Naive thymus-derived CD4-positive, alpha-beta T cell (primary cell): ENCODE measurements at regions of chr2 and their contacts with region 1.

Region 1: GRCh38 chr2:216034065-216034464 is 20.7 kb upstream of the MREG start:
- DNase-seq: peak; percentile 50 to 83 (median 69)
- ATAC-seq: peak; percentile 89
- H3K4me3 ChIP-seq: no peak overlapping the region
- H3K4me3 Mint-ChIP-seq: no peak overlapping the region
- H3K27ac ChIP-seq: no peak overlapping the region
- H3K27ac Mint-ChIP-seq: peak overlapping the region in 1 of 9 donors; percentile 13
- H3K4me1 ChIP-seq: peaks cover 0 to 10% of the 10 kb centered on the region in 2 donors
- H3K4me1 Mint-ChIP-seq: peaks cover 15 to 31% (median 25%) of the 10 kb centered on the region in 7 donors
- H3K27me3 ChIP-seq: no peaks in the 10 kb centered on the region
- H3K27me3 Mint-ChIP-seq: no peaks in the 10 kb centered on the region

Region 2: DNA sequence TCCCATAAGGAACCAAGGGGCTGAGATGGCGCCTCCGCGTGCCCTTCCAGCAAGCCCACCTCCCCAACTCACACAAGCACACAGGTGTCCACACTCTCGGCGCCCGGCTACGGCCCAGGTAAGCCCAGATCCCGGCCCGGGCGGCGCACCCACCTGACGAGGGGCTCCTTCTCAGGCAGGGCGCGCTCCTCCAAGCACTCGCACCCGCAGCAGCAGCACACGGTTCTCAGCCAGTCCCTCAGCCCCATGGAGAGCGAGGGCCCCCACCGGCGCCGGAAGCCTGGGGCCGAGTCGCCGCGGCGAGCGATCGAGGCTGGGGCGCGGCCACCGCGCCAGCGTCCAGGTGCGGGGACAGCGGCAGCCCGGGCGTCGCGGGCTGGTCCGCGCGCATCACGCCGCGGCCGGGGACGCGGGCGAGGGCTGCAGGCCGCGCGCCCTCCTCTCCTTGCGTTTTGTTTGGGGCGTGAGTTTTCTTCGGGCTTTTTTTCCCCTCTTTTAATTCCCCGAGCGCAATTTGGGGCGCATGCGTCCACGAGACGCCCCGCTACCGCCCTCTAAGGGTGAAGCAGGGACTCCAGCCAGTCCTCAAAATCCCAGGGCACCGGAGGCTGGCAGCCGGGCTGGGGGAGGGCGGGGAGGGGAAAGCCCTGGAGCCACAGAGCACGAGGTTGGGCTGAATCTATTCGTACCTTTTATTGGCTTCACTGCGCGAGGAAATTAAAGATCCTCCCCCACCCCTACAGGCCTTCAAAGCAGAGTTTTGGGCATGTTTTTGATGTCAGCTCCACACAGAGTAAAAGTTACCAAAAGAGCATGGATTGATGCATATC is 20.8 kb before region 1 on chr2 and contains the start of gene MREG:
- CTCF ChIA-PET with region 1: interaction called, 8 read pairs
- POLR2A ChIA-PET with region 1: interaction called, 3 read pairs
- intact Hi-C with region 1: loop called (anchors 1 to 2 kb)
- DNase-seq: peak; percentile 67 to 84 (median 80)
- ATAC-seq: peak; percentile 90
- H3K4me3 ChIP-seq: peak within 1 kb of the TSS; percentile 65
- H3K4me3 Mint-ChIP-seq: peak within 1 kb of the TSS; percentile 82 to 93 (median 89)
- H3K27ac ChIP-seq: peak within 1 kb of the TSS; percentile 59
- H3K27ac Mint-ChIP-seq: peak within 1 kb of the TSS; percentile 33 to 91 (median 74)
- H3K4me1 ChIP-seq: peaks cover 30 to 31% of the 10 kb centered on the region in 2 donors
- H3K4me1 Mint-ChIP-seq: peaks cover 27 to 70% (median 53%) of the 10 kb centered on the region in 7 donors
- H3K27me3 ChIP-seq: no peaks in the 10 kb centered on the region
- H3K27me3 Mint-ChIP-seq: peaks cover 0 to 4% (median 0%) of the 10 kb centered on the region in 5 donors
- total RNA-seq, gene MREG: 4.8 to 8.5 (median 6.4) TPM

Region 3: DNA sequence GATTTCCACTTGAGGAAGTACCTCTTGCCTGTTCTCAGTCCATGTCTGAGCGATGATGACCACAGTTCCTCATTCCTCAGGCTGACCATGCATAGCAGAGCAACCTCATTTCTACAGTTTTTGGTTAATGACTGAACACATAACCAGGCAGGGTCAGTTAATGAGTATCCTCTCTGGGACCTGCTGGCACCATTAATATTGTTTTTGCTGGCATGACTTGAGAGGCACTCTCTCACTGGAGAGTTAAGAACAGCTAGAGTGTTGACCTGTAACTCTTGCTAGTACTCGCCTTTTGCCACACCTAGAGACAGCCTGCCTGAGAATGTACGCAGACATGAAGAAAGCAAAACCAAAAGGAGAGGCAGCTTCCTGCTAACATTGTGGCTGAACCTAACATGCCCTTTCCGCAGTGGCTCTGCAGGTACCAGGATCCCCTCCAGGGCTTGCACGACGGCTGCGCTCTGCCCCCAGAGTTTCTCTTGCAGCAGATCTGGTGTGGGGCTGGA is 23.7 kb after region 1 on chr2:
- CTCF ChIA-PET with region 1: interaction called, 6 read pairs
- POLR2A ChIA-PET with region 1: interaction called, 4 read pairs
- intact Hi-C with region 1: loop called (anchors 1 kb)
- DNase-seq: peak in 8 of 9 donors; percentile 48 to 76 (median 67)
- ATAC-seq: peak; percentile 96
- H3K4me3 ChIP-seq: peak overlapping the region; percentile 49
- H3K4me3 Mint-ChIP-seq: peak overlapping the region; percentile 63 to 87 (median 84)
- H3K27ac ChIP-seq: peak overlapping the region; percentile 83
- H3K27ac Mint-ChIP-seq: peak overlapping the region; percentile 94 to 100 (median 98)
- H3K4me1 ChIP-seq: peaks cover 16 to 22% of the 10 kb centered on the region in 2 donors
- H3K4me1 Mint-ChIP-seq: peaks cover 8 to 42% (median 37%) of the 10 kb centered on the region in 7 donors
- H3K27me3 ChIP-seq: no peaks in the 10 kb centered on the region
- H3K27me3 Mint-ChIP-seq: no peaks in the 10 kb centered on the region

Region 4: DNA sequence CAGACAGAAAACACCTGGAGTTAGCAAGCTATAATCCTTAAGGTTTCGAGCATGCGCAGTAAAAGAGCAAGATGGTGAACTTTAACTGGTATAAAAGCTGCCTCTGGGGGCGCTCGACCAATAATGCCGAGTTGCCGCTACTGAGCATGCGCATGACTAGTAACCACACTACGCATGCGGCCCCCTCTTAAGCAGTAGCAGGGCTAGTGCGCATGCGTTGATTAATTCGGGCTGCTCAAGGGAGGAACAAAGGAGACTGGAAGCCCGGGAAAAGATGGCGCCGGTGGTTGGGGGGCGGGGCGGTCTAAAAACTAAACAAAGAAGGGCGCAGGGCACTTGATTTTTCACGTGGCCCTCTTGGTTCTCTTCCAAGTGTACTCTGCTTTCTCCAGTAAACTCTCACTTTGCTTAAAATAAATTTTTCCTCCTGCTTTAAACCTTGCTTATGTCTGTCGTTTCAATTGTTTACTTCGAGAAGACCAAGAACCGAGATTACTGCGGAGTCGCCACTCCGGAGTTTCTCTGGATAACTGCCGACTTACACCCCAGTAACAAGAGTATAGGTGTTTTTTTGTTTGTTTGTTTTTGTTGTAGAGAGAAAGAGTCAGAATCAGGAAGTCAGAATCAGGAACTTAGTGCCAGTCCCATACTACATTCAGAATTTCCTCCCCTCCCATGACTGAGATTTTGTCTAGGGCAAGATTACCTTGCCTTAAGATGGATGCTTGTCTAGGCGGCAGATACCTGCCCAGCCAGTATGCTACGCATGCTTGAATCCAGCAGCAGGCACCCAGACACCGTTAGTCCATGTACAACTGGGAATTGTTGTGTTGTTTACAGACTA is 80.9 kb after region 1 on chr2:
- CTCF ChIA-PET with region 1: interaction called, 7 read pairs
- POLR2A ChIA-PET with region 1: interaction called, 3 read pairs
- intact Hi-C with region 1: loop called (anchors 1 kb)
- DNase-seq: peak; percentile 91 to 98 (median 96)
- ATAC-seq: peak; percentile 94
- H3K4me3 ChIP-seq: peak overlapping the region; percentile 65
- H3K4me3 Mint-ChIP-seq: peak overlapping the region; percentile 88 to 99 (median 94)
- H3K27ac ChIP-seq: peak overlapping the region; percentile 77
- H3K27ac Mint-ChIP-seq: peak overlapping the region; percentile 89 to 99 (median 97)
- H3K4me1 ChIP-seq: peaks cover 35 to 58% of the 10 kb centered on the region in 2 donors
- H3K4me1 Mint-ChIP-seq: peaks cover 51 to 100% (median 96%) of the 10 kb centered on the region in 7 donors
- H3K27me3 ChIP-seq: no peaks in the 10 kb centered on the region
- H3K27me3 Mint-ChIP-seq: peaks cover 0 to 2% (median 0%) of the 10 kb centered on the region in 5 donors

Region 5: DNA sequence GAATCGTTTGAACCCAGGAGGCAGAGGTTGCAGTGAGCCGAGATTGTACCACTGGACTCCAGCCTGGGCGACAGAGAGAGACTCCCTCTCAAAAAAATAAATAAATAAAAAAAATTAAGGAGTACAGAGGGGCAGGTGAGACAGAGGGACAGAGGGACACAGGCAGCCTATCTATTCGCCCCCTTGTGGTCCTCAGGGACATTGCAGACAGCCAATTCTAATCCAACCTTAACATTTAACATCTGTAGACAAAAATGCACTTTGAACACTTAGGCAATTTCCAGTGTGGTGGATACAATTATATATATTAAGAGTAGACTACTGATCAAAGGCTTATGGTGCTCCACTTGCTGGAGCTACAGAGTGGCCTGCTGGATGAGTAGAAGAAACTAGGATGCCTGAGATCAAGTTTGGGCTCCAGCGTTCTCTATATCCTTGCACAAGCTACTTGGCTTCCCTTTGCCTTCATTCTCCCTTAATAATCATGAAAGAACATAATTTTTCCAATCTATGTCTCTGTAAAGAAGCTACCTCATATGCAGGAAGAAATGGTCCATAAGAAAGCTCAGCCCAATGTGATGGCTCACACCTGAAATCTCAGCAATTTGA is 370.0 kb after region 1 on chr2:
- CTCF ChIA-PET with region 1: no interaction called
- POLR2A ChIA-PET with region 1: no interaction called
- intact Hi-C with region 1: loop called in 1 of 2 experiments (anchors 1 kb)
- DNase-seq: peak in 8 of 9 donors; percentile 17 to 57 (median 38)
- ATAC-seq: peak; percentile 80
- H3K4me3 ChIP-seq: no peak overlapping the region
- H3K4me3 Mint-ChIP-seq: no peak overlapping the region
- H3K27ac ChIP-seq: no peak overlapping the region
- H3K27ac Mint-ChIP-seq: no peak overlapping the region
- H3K4me1 ChIP-seq: no peaks in the 10 kb centered on the region
- H3K4me1 Mint-ChIP-seq: peaks cover 0 to 12% (median 2%) of the 10 kb centered on the region in 7 donors
- H3K27me3 ChIP-seq: no peaks in the 10 kb centered on the region
- H3K27me3 Mint-ChIP-seq: peaks cover 0 to 37% (median 3%) of the 10 kb centered on the region in 5 donors